ENCODE measurements at regions of chr3 and their contacts with region 1.

Region 1: GRCh38 chr3:155323063-155323666 is 29.7 kb upstream of the STRIT1 start:
- DNase-seq: peak; percentile 9
- ATAC-seq: peak; percentile 94
- H3K4me3 ChIP-seq: no peak overlapping the region
- H3K27ac ChIP-seq: no peak overlapping the region
- H3K4me1 ChIP-seq: no peaks in the 10 kb centered on the region
- H3K27me3 ChIP-seq: no peaks in the 10 kb centered on the region
- CTCF ChIP-seq: peak; percentile 61 to 70 (median 69); a peak in 5 of 6 replicates
- EP300 ChIP-seq: no peak
- POLR2A ChIP-seq: no peak
- RAD21 ChIP-seq: peak; percentile 87

Region 2: GRCh38 chr3:154323891-154324738 is 999.0 kb before region 1 on chr3 and contains the start of gene DHX36:
- CTCF ChIA-PET with region 1: no interaction called
- POLR2A ChIA-PET with region 1: no interaction called
- RAD21 ChIA-PET with region 1: no interaction called
- SMC1A ChIA-PET with region 1: no interaction called
- in situ Hi-C with region 1: loop called (anchors 10 kb)
- intact Hi-C with region 1: no loop called
- DNase-seq: peak; percentile 57
- ATAC-seq: peak; percentile 90
- H3K4me3 ChIP-seq: peak within 1 kb of the TSS; percentile 92
- H3K27ac ChIP-seq: peak within 1 kb of the TSS; percentile 63
- H3K4me1 ChIP-seq: peaks cover 3% of the 10 kb centered on the region
- H3K27me3 ChIP-seq: no peaks in the 10 kb centered on the region
- CTCF ChIP-seq: peak in 1 of 3 experiments; percentile 32; a peak in 2 of 6 replicates
- EP300 ChIP-seq: no peak
- POLR2A ChIP-seq: peak; percentile 97
- RAD21 ChIP-seq: peak; percentile 41; the same call in 1 of the 2 replicates
- polyA plus RNA-seq, gene DHX36: 40.8 to 41.9 TPM

Region 3: DNA sequence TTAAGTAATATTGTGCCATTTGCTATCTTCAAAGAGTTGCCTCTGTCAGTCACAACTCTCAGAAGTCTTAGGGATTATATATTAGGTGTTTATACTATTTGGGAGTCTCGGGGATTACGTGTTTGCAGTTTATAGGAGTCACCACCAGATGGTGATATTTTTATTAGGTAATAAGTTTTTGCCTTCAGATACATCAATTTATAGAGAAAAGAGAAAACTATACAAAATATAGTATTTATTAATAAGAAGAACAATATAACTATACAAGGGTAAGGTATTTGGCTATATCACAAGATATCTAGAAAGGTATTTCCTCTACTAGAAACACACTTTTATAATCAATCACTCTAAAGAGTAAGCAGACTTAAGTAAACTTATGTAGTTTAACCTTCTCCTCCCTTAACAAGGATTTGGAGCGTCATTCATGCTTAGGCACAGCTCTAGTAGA is 988.2 kb before region 1 on chr3:
- CTCF ChIA-PET with region 1: interaction called, 3 read pairs
- POLR2A ChIA-PET with region 1: no interaction called
- RAD21 ChIA-PET with region 1: no interaction called
- SMC1A ChIA-PET with region 1: no interaction called
- in situ Hi-C with region 1: no loop called
- intact Hi-C with region 1: loop called (anchors 5 kb)
- DNase-seq: no peak
- ATAC-seq: peak; percentile 61; the same call in 2 of the 3 replicates
- H3K4me3 ChIP-seq: no peak overlapping the region
- H3K27ac ChIP-seq: no peak overlapping the region
- H3K4me1 ChIP-seq: no peaks in the 10 kb centered on the region
- H3K27me3 ChIP-seq: no peaks in the 10 kb centered on the region; a peak in 1 of 4 replicates
- CTCF ChIP-seq: peak; percentile 33 to 47 (median 47); a peak in 2 of 6 replicates
- EP300 ChIP-seq: no peak
- POLR2A ChIP-seq: no peak
- RAD21 ChIP-seq: peak; percentile 53

Region 4: DNA sequence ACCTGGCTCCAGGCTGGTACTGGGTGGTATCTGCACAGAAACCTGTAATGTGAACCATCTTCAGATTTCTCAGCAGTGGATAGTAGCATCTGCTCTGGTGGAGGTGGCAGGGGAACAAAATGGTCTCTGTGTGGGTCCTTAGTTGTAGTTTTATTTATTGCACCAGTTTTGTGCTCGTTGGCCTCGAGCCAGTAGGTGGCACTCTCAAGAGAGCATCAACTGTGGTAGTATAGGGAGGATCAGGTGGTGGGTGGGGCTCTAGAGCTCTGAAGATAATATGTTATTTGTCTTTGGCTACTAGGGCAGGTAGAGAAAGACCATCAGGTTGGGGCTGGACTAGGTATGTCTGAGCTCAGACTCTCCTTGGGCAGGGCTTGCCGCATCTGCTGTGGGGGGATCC is 639.1 kb before region 1 on chr3:
- CTCF ChIA-PET with region 1: no interaction called
- POLR2A ChIA-PET with region 1: no interaction called
- RAD21 ChIA-PET with region 1: no interaction called
- SMC1A ChIA-PET with region 1: interaction called, 4 read pairs
- in situ Hi-C with region 1: no loop called
- intact Hi-C with region 1: loop called (anchors 10 kb)
- DNase-seq: no peak
- ATAC-seq: peak; percentile 58
- H3K4me3 ChIP-seq: no peak overlapping the region
- H3K27ac ChIP-seq: no peak overlapping the region
- H3K4me1 ChIP-seq: no peaks in the 10 kb centered on the region
- H3K27me3 ChIP-seq: no peaks in the 10 kb centered on the region
- CTCF ChIP-seq: 0 out of 6 replicates have a peak, but pooled peaks of 2 of the 3 experiments have one; percentile 3
- EP300 ChIP-seq: no peak
- POLR2A ChIP-seq: no peak
- RAD21 ChIP-seq: no peak

Region 5: DNA sequence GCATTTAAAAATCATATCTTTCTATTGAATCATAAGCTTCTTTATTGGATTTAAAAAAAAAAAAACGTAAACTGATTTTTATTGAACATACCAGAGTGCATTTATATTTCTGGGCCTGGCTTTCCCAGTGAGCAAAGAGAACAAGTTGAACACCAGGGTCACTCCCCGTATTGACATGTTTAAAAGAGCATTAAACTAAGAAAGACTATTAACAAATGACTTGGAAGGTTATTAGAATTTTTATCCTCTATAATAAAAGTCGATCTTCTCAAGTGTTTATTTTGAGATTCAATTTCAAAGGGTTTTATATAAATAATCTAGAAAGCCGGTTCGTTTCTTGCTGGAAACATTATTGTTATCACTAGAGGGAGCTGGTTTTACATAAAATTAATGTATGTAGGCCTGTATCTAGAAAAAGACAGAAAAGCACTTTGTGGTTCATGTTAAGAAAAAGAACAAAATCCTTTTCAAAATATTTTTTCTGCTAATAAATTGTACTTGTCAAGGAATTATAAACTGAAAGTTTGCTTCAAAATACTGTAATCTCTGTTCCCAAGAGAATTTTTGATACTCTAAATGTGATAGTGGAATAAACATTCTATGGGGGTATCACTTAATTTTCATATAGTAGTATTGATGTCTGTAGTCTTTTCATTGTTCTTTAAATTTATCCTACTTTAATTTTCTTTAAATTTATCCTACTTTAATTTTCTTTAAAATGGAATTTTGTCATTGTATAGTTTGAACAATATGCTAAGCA is 564.9 kb before region 1 on chr3:
- CTCF ChIA-PET with region 1: interaction called, 4 read pairs
- POLR2A ChIA-PET with region 1: no interaction called
- RAD21 ChIA-PET with region 1: no interaction called
- SMC1A ChIA-PET with region 1: no interaction called
- in situ Hi-C with region 1: no loop called
- intact Hi-C with region 1: loop called (anchors 2 kb)
- DNase-seq: no peak
- ATAC-seq: no peak
- H3K4me3 ChIP-seq: no peak overlapping the region
- H3K27ac ChIP-seq: no peak overlapping the region
- H3K4me1 ChIP-seq: no peaks in the 10 kb centered on the region
- H3K27me3 ChIP-seq: no peaks in the 10 kb centered on the region
- CTCF ChIP-seq: no peak; a peak in 1 of 6 replicates
- EP300 ChIP-seq: no peak
- POLR2A ChIP-seq: no peak
- RAD21 ChIP-seq: 0 out of 2 replicates have a peak, but pooled peaks have one; percentile 26

Region 6: GRCh38 chr3:154904328-154904727 is 418.8 kb before region 1 on chr3:
- CTCF ChIA-PET with region 1: interaction called, 8 read pairs
- POLR2A ChIA-PET with region 1: no interaction called
- RAD21 ChIA-PET with region 1: no interaction called
- SMC1A ChIA-PET with region 1: no interaction called
- in situ Hi-C with region 1: no loop called
- intact Hi-C with region 1: loop called (anchors 1 kb)
- DNase-seq: no peak
- ATAC-seq: peak; percentile 63
- H3K4me3 ChIP-seq: no peak overlapping the region
- H3K27ac ChIP-seq: no peak overlapping the region
- H3K4me1 ChIP-seq: no peaks in the 10 kb centered on the region
- H3K27me3 ChIP-seq: no peaks in the 10 kb centered on the region
- CTCF ChIP-seq: peak in 2 of 3 experiments; percentile 6 to 17; a peak in 1 of 6 replicates
- EP300 ChIP-seq: no peak
- POLR2A ChIP-seq: no peak
- RAD21 ChIP-seq: 0 out of 2 replicates have a peak, but pooled peaks have one; percentile 26

Region 7: DNA sequence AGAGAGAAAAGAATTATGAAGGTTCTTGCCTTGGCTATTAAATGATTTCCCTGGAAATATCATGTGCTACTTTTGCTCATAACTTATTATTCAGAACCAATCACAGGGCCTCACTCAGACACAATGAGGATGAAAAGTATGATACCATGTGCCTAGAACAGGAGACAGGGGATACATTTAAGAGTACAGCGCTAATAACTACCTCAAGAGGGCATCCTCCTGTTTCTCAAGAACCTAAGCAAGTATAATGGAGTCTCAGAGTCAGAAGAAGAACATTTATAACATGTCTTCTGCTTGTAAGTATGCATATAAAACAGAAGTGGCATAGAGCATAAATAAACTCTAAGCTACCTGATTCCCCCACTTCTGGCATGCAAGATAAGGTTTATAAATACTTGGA is 368.4 kb before region 1 on chr3:
- CTCF ChIA-PET with region 1: interaction called, 4 read pairs
- POLR2A ChIA-PET with region 1: no interaction called
- RAD21 ChIA-PET with region 1: no interaction called
- SMC1A ChIA-PET with region 1: no interaction called
- in situ Hi-C with region 1: no loop called
- intact Hi-C with region 1: loop called (anchors 5 kb)
- DNase-seq: no peak
- ATAC-seq: peak; percentile 51; the same call in 2 of the 3 replicates
- H3K4me3 ChIP-seq: no peak overlapping the region
- H3K27ac ChIP-seq: no peak overlapping the region
- H3K4me1 ChIP-seq: no peaks in the 10 kb centered on the region
- H3K27me3 ChIP-seq: no peaks in the 10 kb centered on the region
- CTCF ChIP-seq: peak in 1 of 3 experiments; percentile 22; a peak in 1 of 6 replicates
- EP300 ChIP-seq: no peak
- POLR2A ChIP-seq: no peak
- RAD21 ChIP-seq: no peak; the same call in 1 of the 2 replicates

Measured in GM12878 (cell line).